Cardiac septum (tissue), 1 donor: ENCODE measurements at regions of chrX and their contacts with region 1.

Region 1: DNA sequence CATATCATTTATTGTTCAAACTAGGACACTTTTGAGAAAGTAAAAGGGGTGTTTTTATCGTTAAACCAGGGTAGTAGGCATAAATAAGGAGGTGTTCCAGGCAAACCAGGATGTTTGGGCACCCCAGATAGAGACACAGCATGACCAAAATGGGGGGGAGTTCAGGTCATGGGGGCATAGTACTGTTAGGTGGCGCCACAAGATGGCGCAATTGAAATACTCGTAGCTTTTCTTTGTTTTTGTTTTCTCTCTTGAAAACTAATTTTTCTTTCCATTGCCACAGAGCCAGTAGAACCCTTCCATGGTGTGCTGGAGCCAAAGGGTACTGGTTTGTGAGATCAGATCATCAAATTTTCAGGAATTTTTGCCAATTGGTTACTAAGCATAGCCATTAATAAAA is 283.4 kb downstream of the BCOR start:
- DNase-seq: no peak

Region 2: GRCh38 chrX:39652336-39653131 is 161.9 kb before region 1 on chrX:
- intact Hi-C with region 1: loop called (anchors 10 kb)
- DNase-seq: no peak

Region 3: GRCh38 chrX:39755143-39756032 is 59.0 kb before region 1 on chrX:
- intact Hi-C with region 1: loop called (anchors 5 kb)
- DNase-seq: peak; percentile 88

Region 4: DNA sequence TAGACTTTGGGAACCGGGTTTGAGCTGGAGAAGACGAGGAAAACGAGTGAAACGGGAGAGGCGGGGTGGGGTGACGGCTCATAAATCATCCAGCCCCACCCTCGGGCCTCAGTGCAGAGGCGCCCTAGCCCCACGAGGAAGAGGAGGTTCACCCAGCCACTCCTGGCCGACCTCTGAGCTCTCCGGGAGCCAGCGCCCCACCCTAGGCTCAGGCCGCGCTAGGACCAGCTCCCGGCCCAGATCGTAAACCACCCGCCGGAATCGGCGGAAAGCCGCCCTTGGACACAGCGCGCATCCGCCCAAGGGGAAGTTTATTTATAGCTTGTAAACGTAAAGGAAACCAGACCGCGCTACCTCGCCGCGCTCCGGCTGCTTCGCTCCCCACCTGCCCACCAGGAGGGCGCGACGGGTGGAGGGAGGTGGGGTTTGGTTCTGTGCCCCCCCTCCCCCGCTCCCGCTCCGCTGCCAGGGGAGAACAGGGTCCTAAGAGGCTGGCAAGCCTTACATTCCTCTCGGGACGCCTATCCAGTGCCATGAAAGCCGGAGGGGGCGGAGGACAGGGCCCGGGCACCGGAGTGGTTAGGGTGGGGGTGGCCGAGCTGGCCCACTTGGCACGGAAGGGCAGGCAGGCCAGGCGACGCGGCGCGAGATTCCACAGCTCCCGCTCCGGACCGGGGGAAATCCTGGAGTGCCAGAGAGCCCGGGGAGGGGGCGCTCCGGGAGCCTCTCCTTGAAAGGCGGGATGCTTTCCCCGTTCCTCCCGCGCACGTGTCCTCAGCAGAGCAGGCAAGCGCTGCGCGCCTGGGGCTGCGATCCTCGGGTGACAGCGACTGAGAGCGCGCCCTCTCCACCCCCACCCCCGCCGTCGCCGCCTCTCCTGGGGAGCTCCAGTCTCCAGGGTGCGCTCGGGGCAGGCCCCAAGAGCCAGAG is 199.1 kb after region 1 on chrX:
- intact Hi-C with region 1: loop called (anchors 5 kb)
- DNase-seq: peak; percentile 86

Region 5: DNA sequence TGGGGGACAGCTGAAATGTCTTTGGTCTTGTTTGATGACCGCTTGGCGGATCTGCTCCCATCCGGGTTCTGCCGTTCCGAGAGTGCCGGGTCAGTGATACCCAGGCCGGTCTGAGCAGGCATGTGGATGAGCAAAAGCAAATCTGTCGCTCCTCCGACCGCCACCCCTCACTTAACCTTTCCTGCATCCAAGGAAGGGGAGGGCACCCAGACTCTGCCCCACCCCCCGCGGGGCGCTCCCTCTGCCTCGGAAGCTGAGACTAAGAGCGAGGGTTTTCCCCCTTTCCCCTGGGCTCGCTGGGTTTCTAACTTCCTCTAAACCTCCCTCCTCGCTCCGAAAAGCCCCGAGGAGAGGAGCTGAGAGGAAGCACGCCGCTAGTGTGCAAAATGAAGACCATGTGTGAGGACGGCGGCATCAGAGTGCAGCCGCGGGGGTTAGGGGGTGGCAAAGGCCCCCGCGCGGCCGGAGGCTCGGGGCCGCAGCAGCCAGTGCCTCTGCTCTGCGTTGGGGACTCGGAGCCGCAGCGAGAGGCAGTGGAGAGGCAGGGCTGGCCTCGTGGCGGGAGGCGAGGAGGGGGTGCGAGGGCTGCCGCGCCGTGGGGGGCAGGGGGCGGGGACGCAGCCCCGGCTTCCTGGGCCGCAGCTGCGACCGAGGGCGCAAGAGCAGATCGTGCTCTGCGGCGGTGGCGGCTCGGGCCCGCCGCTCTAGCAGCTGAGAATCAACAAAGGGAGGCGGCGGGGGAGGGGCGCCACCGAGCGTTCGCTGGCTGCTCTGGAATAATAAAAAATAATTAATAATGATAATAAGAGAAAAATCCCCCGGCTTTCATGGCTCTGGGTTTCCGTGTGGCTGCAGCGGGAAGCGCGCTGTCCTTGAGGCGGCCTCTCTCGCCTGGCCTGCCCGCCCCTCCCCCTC is 339.2 kb after region 1 on chrX:
- intact Hi-C with region 1: loop called (anchors 5 kb)
- DNase-seq: peak; percentile 80

Region 6: GRCh38 chrX:40266490-40267333 is 452.3 kb after region 1 on chrX:
- intact Hi-C with region 1: loop called (anchors 5 kb)
- DNase-seq: peak; percentile 86